Sigmoid colon (tissue), 7 donors: ENCODE measurements at regions of chr6 and their contacts with region 1.

Region 1: DNA sequence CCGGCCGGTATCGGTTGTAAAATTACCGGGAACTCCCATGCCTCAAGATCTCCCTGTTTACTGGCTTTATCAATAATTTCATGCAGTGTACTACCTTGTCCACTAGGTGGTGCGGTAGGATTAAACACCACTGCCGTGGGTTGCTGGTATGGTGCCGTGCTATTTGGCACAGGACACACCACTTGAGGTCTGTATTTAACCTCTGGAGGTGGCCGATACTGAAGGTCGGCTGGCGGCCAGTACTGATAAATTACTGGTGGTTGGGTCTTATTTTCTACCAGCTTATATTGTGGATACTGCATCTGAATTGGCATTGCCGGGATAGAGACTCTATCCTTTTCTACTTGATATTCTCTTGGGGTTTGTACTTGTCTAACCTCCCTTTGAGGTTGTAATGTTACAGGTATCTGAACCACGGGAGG is 14.3 kb upstream of the PTCRA start:
- DNase-seq: peak; percentile 90
- H3K4me3 ChIP-seq: no peak overlapping the region
- H3K27ac ChIP-seq: no peak overlapping the region
- H3K4me1 ChIP-seq: peaks cover 0 to 7% (median 1%) of the 10 kb centered on the region in 4 donors
- H3K27me3 ChIP-seq: no peaks in the 10 kb centered on the region
- CTCF ChIP-seq: peak; percentile 85 to 89 (median 88)
- EP300 ChIP-seq: no peak
- POLR2A ChIP-seq: no peak

Region 2: DNA sequence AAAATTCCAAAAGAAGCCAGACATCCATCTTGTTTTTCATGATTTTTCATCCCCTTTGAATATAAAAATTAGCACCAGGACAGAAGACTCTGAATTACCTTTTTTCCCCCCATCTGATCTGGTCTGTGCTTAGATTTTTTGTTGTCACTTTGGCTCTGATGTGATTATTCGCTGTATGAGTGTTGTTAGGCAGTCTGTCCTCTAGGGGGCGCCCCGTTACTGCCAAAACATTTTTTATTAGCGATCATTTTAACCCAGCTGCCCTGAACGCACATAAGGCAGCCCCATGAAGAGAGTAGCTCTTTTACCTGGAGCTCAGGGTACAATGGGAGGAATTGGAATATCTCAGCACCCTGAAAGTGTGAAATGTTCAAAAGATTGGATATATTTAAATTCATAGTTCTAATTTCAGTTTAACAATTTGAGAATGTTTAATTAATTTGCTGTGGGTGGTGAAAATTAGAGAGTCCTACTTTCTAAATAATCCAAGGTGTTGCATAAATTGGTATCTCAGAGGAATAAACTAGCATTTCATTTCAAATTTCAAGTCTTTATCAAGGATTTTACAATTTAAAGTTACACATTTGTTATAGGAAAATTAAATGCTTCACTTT is 239.9 kb before region 1 on chr6:
- intact Hi-C with region 1: loop called (anchors 1 kb)
- DNase-seq: peak; percentile 90
- H3K4me3 ChIP-seq: no peak overlapping the region
- H3K27ac ChIP-seq: peak overlapping the region in 1 of 4 donors; percentile 3
- H3K4me1 ChIP-seq: peaks cover 0 to 7% (median 0%) of the 10 kb centered on the region in 4 donors
- H3K27me3 ChIP-seq: no peaks in the 10 kb centered on the region
- CTCF ChIP-seq: peak; percentile 67 to 88 (median 87)
- EP300 ChIP-seq: no peak
- POLR2A ChIP-seq: no peak

Region 3: DNA sequence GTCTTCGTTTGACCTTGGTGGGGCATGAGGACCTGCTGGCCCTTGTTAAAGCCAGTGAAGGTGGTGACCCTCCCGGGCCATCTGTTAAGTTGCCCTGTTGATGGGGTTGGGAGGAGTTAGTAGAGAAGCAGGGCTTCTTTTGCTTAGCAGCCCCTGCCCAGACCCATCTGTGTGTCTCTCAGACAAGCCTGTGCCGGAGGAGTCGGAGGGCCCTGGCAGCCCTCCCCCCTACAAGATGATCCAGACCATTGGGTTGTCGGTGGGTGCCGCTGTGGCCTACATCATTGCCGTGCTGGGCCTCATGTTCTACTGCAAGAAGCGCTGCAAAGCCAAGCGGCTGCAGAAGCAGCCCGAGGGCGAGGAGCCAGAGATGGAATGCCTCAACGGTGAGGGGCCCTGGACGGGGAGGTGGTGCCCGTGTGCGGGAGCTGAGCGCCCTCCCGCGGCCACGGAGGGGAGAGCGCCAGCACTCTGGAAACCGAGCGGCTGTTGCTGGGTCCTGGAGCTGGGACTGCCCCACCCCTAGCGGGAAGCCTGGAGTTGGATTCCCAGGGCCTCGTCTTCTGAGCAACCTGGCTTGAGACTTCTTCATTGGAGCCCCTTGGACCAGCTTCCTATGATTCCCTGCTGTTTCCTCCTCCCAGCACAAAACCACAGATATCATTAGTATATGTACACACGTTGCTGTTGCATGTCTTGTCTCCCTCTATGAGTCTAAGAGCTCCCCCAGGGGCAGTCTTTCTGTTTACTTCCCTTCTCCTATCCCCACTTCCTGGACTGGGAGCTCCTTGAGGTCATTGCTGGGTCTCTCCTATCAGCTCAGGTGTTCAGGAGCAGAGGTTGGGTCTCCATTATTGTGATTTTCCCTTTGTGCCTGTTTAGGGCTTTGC is 241.9 kb after region 1 on chr6:
- intact Hi-C with region 1: loop called (anchors 1 kb)
- DNase-seq: peak; percentile 97
- H3K4me3 ChIP-seq: no peak overlapping the region
- H3K27ac ChIP-seq: peak overlapping the region; percentile 8 to 63 (median 58)
- H3K4me1 ChIP-seq: peaks cover 0 to 13% (median 11%) of the 10 kb centered on the region in 4 donors
- H3K27me3 ChIP-seq: no peaks in the 10 kb centered on the region
- CTCF ChIP-seq: peak; percentile 90 to 93 (median 92)
- EP300 ChIP-seq: no peak
- POLR2A ChIP-seq: no peak